H1 (cell line): ENCODE measurements at regions of chr4 and their contacts with region 1.

Region 1: GRCh38 chr4:87932718-87933141 is 42.8 kb upstream of the SPP1 start:
- DNase-seq: no peak
- H3K4me3 ChIP-seq: no peak overlapping the region
- H3K27ac ChIP-seq: no peak overlapping the region
- H3K4me1 ChIP-seq: peaks cover 0 to 6% (median 0%) of the 10 kb centered on the region in 4 experiments; a peak in 2 of 7 replicates
- H3K27me3 ChIP-seq: no peaks in the 10 kb centered on the region
- CTCF ChIP-seq: no peak
- EP300 ChIP-seq: no peak
- POLR2A ChIP-seq: peak; percentile 62 to 99
- RAD21 ChIP-seq: no peak

Region 2: GRCh38 chr4:87644286-87644685 is 288.4 kb before region 1 on chr4:
- CTCF ChIA-PET with region 1: no interaction called
- POLR2A ChIA-PET with region 1: no interaction called
- DNase-seq: no peak
- H3K4me3 ChIP-seq: no peak overlapping the region
- H3K27ac ChIP-seq: no peak overlapping the region
- H3K4me1 ChIP-seq: no peaks in the 10 kb centered on the region
- H3K27me3 ChIP-seq: no peaks in the 10 kb centered on the region
- CTCF ChIP-seq: no peak
- EP300 ChIP-seq: no peak
- POLR2A ChIP-seq: no peak
- RAD21 ChIP-seq: no peak

Region 3: DNA sequence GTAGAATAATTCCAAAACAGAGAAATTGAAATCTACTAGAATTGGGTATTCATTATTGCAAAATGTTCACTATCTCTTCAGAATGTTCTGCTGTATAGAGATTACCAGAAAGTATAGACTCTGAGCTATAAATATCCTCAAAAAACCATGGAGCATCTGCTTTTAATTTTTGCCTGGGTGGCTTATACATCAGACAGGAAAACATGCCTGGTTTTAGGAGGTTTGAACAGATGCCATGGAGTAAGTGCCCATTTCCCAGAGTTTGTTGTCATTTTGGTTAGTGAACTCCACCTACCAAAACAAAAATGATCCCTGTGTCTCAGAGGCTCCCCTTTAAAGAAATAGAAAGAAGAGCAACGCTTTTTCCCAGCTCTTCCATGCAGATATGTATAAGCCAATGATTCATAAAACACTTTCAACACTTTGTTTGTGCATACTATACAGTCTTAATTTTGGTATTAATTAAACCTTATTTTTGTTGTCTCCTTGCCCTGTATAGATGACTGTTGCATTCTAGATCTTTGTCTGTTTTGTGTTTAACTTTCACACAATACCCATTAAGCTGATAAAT is 31.2 kb before region 1 on chr4:
- CTCF ChIA-PET with region 1: no interaction called
- POLR2A ChIA-PET with region 1: interaction called, 10 read pairs
- DNase-seq: no peak
- H3K4me3 ChIP-seq: no peak overlapping the region
- H3K27ac ChIP-seq: no peak overlapping the region
- H3K4me1 ChIP-seq: peaks cover 0 to 3% (median 2%) of the 10 kb centered on the region in 4 experiments; a peak in 3 of 7 replicates
- H3K27me3 ChIP-seq: no peaks in the 10 kb centered on the region
- CTCF ChIP-seq: no peak
- EP300 ChIP-seq: no peak
- POLR2A ChIP-seq: no peak
- RAD21 ChIP-seq: no peak

Region 4: DNA sequence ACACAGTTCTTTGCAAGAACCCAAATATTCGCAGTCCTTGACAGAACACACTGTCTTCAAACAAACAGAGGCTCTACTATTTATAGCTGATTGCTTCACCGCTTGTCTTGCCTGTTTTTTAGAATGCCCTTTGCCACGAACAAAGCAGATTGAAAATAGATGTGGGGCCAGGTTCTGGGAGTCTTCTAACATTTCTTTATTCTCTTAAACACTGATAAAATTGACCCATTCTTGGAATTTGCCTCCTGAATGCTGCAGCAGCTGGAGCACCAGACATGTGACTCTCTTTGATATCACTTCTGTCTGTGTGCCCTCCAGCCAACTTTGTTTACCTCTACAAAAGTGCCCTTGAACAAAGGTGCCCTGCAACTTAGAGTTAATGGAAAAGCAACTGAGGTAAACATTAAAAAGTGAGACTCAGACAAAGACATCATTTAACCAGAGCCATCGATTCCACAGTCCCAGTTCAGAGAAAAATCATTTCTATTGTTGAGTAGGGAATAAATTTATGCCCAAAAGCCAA is 21.4 kb before region 1 on chr4:
- CTCF ChIA-PET with region 1: interaction called, 3 read pairs
- POLR2A ChIA-PET with region 1: interaction called, 25 read pairs
- DNase-seq: no peak
- H3K4me3 ChIP-seq: no peak overlapping the region
- H3K27ac ChIP-seq: no peak overlapping the region
- H3K4me1 ChIP-seq: peaks cover 0 to 12% (median 9%) of the 10 kb centered on the region in 4 experiments
- H3K27me3 ChIP-seq: no peaks in the 10 kb centered on the region
- CTCF ChIP-seq: no peak
- EP300 ChIP-seq: no peak
- POLR2A ChIP-seq: no peak
- RAD21 ChIP-seq: no peak

Region 5: GRCh38 chr4:87949961-87950360 is 17.2 kb after region 1 on chr4:
- CTCF ChIA-PET with region 1: interaction called, 4 read pairs
- POLR2A ChIA-PET with region 1: interaction called, 92 read pairs
- DNase-seq: no peak
- H3K4me3 ChIP-seq: no peak overlapping the region
- H3K27ac ChIP-seq: no peak overlapping the region
- H3K4me1 ChIP-seq: peaks cover 0 to 4% (median 1%) of the 10 kb centered on the region in 4 experiments; a peak in 5 of 7 replicates
- H3K27me3 ChIP-seq: no peaks in the 10 kb centered on the region; a peak in 1 of 7 replicates
- CTCF ChIP-seq: no peak
- EP300 ChIP-seq: no peak
- POLR2A ChIP-seq: no peak
- RAD21 ChIP-seq: no peak

Region 6: DNA sequence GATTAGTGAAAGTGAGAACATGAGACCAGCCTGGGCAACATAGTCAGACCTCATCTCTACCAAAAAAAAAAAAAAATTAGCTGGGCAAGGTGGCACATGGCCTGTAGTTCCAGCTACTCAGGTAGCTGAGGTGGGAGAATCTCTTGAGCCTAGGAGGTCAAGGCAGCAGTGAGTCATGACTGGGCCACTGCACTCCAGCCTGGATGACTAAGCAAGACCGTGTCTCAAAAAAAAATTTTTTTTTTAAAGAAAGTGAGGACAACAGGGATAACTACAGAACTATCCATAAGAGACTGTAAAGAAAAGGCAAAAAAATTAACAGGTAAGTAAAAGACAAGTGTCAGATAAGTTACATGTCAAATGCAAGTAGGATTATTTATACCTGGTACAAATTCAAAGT is 29.3 kb after region 1 on chr4:
- CTCF ChIA-PET with region 1: interaction called, 6 read pairs
- POLR2A ChIA-PET with region 1: interaction called, 88 read pairs
- DNase-seq: no peak
- H3K4me3 ChIP-seq: no peak overlapping the region
- H3K27ac ChIP-seq: no peak overlapping the region
- H3K4me1 ChIP-seq: peaks cover 0 to 4% (median 2%) of the 10 kb centered on the region in 4 experiments; a peak in 2 of 7 replicates
- H3K27me3 ChIP-seq: no peaks in the 10 kb centered on the region; a peak in 1 of 7 replicates
- CTCF ChIP-seq: no peak
- EP300 ChIP-seq: no peak
- POLR2A ChIP-seq: no peak
- RAD21 ChIP-seq: no peak